ENCODE measurements at regions of chr1 and their contacts with region 1.

Region 1: DNA sequence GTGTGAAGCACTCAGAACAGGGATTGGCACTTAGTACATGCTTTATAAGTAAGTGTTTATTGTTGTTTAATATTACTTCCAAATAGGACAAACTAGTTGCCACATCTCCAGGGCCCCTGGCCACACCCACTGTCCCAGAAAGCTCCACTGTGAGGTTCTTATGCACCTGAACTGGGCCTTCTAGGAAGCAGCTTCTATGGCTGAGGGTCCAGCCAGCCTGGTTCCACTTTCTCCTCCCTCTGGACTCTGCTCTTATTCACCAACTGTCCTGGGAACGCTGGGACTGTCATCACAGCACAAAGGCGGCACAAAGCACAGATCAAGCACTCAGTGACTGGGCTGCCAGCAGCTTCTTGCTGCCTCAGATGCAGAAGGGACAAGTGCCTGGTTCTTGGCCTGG is 29.5 kb upstream of the ZNF648 start:
- DNase-seq: no peak
- H3K4me3 ChIP-seq: no peak overlapping the region
- CTCF ChIP-seq: no peak
- POLR2A ChIP-seq: no peak

Region 2: DNA sequence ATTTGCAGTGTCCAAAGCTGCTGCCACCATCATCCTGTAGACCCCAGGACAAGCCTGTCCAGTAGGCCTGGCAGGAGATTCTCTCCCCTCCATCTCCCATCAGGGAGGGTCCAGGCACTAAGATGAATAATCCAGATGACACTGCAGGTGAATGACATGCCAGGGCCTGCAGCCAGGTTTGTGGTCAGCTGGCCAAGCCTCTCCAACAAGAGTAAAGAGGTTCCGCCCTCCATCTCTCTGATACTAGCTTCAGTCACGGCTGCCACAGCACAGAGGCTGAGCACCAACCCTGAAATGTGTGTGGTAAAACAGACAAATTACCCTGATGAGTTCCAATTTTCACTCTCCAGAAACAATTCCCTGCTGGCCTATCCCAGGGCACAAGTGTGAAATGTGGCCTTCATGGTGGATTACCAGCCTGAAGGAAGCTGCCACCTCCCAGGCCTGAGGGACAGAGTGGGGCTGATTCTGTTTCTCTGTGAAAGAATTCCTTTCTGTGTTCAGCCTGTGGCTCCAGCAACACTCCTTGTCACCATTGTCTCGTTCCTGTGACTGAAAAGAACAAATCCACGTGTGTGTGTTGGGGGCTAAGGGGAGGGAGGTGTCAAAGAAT is 1880.9 kb before region 1 on chr1:
- intact Hi-C with region 1: no loop called
- DNase-seq: no peak
- H3K4me3 ChIP-seq: no peak overlapping the region
- CTCF ChIP-seq: no peak
- POLR2A ChIP-seq: no peak

Region 3: GRCh38 chr1:180287988-180288705 is 1802.9 kb before region 1 on chr1:
- intact Hi-C with region 1: no loop called
- DNase-seq: no peak
- H3K4me3 ChIP-seq: no peak overlapping the region
- CTCF ChIP-seq: no peak
- POLR2A ChIP-seq: no peak

Region 4: DNA sequence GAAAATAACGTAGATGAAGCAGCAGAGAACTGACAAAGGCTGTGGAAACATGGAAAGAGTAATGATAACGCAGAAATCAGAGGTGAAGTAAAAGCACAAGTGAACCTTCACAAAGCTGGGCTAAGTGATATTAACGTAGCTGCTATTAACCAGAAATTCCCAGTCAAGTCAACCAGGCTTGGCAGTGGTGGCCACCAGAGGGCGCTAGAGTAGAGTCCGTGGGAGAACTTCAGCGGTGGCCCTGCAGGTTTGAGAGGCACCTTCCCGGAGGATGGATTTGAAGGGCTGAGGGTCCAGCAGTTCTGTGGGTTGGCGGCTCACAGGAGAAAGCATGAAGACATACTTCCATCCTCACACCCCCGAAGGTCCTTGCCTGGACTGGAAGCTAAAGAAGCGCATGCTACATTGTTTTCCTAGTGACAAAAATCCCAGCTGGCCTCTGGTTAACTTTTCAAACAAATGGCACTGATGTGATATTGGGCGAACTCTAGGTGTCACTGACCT is 52.1 kb after region 1 on chr1:
- intact Hi-C with region 1: loop called (anchors 2 kb)
- DNase-seq: peak; percentile 95 to 99
- H3K4me3 ChIP-seq: no peak overlapping the region
- CTCF ChIP-seq: peak in 1 of 3 donors; percentile 97
- POLR2A ChIP-seq: no peak

Region 5: DNA sequence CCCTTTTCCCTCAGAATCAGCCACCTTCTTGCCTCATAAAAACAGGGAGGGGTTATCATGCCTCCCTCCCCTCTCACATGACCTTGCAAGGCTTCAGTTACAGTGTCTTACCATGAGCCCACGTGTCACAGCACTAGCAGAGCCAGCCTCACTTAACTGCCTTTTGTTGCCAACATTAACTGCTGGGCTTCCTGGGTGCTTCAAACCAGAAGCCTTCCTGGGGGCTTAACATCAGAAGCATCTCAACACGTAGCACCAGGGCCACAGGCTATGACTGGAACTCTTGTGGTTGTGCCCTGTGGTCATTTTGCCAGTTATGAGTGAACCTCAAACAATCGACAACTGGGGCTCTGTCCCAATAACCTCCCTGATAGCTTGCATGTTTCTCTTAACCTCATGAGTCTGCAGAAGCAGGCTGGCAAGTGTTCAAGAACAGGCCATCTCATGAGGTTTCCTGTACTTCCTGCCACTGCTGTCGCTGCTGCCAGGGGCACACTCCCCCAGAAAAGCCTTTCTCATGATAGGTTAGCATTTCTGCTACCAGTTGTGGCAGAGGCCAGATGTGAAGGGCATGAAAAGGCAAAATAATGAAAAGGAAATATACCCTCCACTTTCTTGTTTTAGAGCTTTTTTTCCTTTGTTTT is 168.3 kb after region 1 on chr1:
- intact Hi-C with region 1: no loop called
- DNase-seq: peak; percentile 83 to 92
- H3K4me3 ChIP-seq: no peak overlapping the region
- CTCF ChIP-seq: no peak
- POLR2A ChIP-seq: no peak

Region 6: DNA sequence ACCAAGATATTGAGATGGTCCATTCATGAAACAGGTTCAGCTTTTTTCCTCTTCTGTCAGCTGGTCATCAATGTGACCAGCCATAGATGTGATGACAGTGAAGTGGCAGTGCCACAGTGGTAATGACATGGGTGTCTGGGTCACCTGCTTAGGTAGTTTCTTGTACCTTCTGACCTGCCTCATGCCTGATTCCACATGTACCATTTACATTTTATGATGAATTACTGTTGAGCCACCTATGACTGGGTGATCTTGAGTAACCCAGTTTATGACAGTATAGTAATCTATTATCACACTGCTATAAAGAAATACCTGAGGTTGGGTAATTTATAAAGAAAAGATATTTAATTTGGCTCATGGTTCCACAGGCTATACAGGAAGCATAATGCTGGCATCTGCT is 404.6 kb after region 1 on chr1:
- intact Hi-C with region 1: no loop called
- DNase-seq: no peak
- H3K4me3 ChIP-seq: no peak overlapping the region
- CTCF ChIP-seq: no peak
- POLR2A ChIP-seq: no peak